AG04450 (cell line): ENCODE measurements at regions of chr13 and their contacts with region 1.

Region 1: DNA sequence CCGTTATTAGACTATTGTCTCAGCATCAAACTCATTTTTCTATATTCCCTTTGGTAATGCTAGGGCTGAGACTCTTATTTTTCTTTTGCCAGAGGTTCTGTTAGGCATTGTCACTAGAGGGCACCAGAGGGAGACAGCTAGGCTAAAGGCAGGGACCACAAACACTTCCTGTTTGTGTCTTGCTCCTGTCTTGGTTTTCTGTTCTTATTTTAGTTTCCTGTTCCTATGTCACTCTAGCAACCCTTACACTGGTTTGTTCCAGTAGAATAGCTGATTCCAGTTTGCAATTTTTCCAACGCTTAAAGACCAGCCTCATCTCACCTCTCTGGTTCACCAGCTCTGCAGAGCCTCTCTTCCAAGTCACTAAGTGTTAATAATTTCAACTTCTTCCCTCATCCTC is 772.0 kb downstream of the DIAPH3 start:
- DNase-seq: peak; percentile 51
- H3K4me3 ChIP-seq: no peak overlapping the region
- H3K27ac ChIP-seq: no peak overlapping the region
- H3K27me3 ChIP-seq: no peaks in the 10 kb centered on the region
- CTCF ChIP-seq: peak; percentile 98

Region 2: GRCh38 chr13:59274958-59275727 is 116.6 kb before region 1 on chr13:
- CTCF ChIA-PET with region 1: no interaction called
- POLR2A ChIA-PET with region 1: no interaction called
- DNase-seq: no peak
- H3K4me3 ChIP-seq: no peak overlapping the region
- H3K27ac ChIP-seq: no peak overlapping the region
- H3K27me3 ChIP-seq: no peaks in the 10 kb centered on the region
- CTCF ChIP-seq: no peak

Region 3: GRCh38 chr13:59345316-59345715 is 46.4 kb before region 1 on chr13:
- CTCF ChIA-PET with region 1: no interaction called
- POLR2A ChIA-PET with region 1: no interaction called
- DNase-seq: no peak
- H3K4me3 ChIP-seq: no peak overlapping the region
- H3K27ac ChIP-seq: no peak overlapping the region
- H3K27me3 ChIP-seq: peaks cover 2% of the 10 kb centered on the region
- CTCF ChIP-seq: no peak

Region 4: GRCh38 chr13:59409211-59409610 is 17.5 kb after region 1 on chr13:
- CTCF ChIA-PET with region 1: interaction called, 14 read pairs
- POLR2A ChIA-PET with region 1: interaction called, 13 read pairs
- DNase-seq: peak; percentile 32
- H3K4me3 ChIP-seq: no peak overlapping the region
- H3K27ac ChIP-seq: no peak overlapping the region
- H3K27me3 ChIP-seq: no peaks in the 10 kb centered on the region
- CTCF ChIP-seq: no peak

Region 5: GRCh38 chr13:59510386-59510785 is 118.7 kb after region 1 on chr13:
- CTCF ChIA-PET with region 1: interaction called, 12 read pairs
- POLR2A ChIA-PET with region 1: no interaction called
- DNase-seq: no peak
- H3K4me3 ChIP-seq: no peak overlapping the region
- H3K27ac ChIP-seq: no peak overlapping the region
- H3K27me3 ChIP-seq: no peaks in the 10 kb centered on the region
- CTCF ChIP-seq: no peak

Region 6: DNA sequence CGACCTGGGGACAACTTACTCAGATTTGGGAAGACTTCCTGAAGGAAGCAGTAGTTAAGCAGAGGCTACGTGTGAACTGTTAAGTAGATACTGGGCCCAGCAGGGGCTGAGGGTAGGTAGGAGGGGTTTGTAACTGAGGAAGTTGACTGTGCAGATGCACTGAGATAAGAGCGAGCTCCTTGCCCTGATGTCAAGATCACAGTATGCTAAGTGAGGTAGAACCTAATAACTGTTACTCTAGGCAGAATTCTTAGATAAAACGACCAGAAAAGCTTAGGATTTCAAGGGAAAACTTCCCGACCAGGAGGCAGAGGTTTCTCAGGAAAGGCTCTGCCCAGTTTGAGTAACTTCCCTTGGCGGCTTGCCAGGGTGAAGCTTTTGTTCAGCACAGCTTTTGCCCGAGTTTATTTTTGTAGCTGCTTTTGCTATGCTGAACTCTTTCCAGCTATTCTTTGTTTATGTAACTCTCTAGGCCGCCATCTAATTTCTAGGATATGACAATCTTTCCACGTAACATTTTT is 139.9 kb after region 1 on chr13:
- CTCF ChIA-PET with region 1: interaction called, 16 read pairs
- POLR2A ChIA-PET with region 1: no interaction called
- DNase-seq: peak; percentile 74
- H3K4me3 ChIP-seq: no peak overlapping the region
- H3K27ac ChIP-seq: no peak overlapping the region
- H3K27me3 ChIP-seq: no peaks in the 10 kb centered on the region
- CTCF ChIP-seq: no peak

Region 7: GRCh38 chr13:59906413-59907049 is 514.8 kb after region 1 on chr13:
- CTCF ChIA-PET with region 1: interaction called, 27 read pairs
- POLR2A ChIA-PET with region 1: no interaction called
- DNase-seq: peak; percentile 8
- H3K4me3 ChIP-seq: no peak overlapping the region
- H3K27ac ChIP-seq: no peak overlapping the region
- H3K27me3 ChIP-seq: no peaks in the 10 kb centered on the region
- CTCF ChIP-seq: peak; percentile 75